ENCODE measurements at regions of chr17 and their contacts with region 1.

Region 1: DNA sequence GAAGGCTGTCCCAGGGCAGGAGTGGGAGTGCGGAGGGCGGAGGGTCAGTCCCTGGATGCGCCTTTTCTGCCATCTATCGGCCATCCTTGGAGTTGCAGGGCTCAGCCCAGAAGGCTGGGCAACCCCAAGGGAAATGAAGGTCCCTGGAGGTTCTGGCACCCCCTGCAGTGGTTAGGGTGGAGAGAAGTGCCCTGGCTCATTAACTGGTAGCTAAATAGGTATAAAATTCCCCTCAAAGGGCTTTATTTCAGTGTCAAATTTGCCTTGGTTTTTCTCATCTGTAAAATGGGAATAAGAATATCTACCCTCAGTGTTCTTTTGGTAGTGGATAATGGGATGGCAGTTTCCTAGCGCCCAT is 22.4 kb downstream of the C17orf75 start:
- DNase-seq: peak; percentile 67 to 85 (median 76)
- H3K4me3 ChIP-seq: peak overlapping the region in 9 of 59 donors; percentile 0 to 37 (median 21)
- H3K27ac ChIP-seq: no peak overlapping the region
- H3K27me3 ChIP-seq: no peaks in the 10 kb centered on the region
- CTCF ChIP-seq: peak; percentile 58 to 97 (median 93)

Region 2: GRCh38 chr17:32206861-32207260 is 112.7 kb before region 1 on chr17:
- intact Hi-C with region 1: loop called in 1 of 2 experiments (anchors 5 kb)
- DNase-seq: no peak
- H3K4me3 ChIP-seq: no peak overlapping the region
- H3K27ac ChIP-seq: no peak overlapping the region
- H3K27me3 ChIP-seq: no peaks in the 10 kb centered on the region
- CTCF ChIP-seq: no peak

Region 3: DNA sequence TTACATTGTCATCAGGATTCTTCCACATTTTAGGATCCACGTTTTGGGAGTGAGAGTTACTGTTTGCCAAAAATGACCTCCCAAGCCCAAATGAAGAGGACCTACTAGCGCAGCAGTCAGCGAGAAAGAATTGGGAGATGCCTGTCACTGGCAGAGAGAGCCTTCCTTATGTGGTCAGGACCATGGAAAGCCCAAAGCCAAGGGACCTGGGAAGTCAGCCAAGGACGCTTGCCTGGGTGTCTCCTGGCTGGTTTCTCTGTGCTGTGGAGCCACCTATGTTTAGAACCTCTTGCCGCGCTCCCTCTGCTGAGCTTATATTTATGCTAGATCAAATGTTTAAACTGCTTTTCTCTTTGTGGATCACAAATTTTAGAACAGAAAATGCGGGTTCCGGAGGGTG is 78.8 kb before region 1 on chr17:
- intact Hi-C with region 1: no loop called
- DNase-seq: peak in 1 of 10 donors; percentile 82
- H3K4me3 ChIP-seq: no peak overlapping the region
- H3K27ac ChIP-seq: no peak overlapping the region
- H3K27me3 ChIP-seq: no peaks in the 10 kb centered on the region
- CTCF ChIP-seq: no peak

Region 4: DNA sequence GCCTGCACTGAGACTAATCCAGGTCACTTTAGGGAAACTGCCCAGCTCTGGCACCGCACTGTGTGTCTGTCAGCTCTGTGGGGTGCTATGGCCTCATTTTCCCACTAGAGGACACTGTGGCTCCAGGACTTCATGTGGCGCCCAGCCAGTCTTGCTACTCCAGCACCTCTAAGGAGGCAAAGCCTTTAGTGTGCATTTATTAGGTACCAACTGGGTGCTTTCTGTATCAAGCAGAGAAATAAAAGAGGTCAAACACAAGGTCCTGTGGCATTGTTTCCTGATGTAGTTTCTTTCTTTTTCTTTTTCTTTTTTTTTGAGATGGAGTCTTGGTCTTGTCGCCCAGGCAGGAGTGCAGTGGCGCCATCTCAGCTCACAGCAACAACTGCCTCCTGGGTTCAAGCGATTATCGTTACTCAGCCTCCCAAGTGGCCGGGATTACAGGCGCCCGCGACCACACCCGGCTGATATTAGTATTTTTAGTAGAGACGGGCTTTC is 66.4 kb before region 1 on chr17:
- intact Hi-C with region 1: loop called (anchors 1 to 2 kb)
- DNase-seq: peak; percentile 77 to 92 (median 86)
- H3K4me3 ChIP-seq: no peak overlapping the region
- H3K27ac ChIP-seq: no peak overlapping the region
- H3K27me3 ChIP-seq: no peaks in the 10 kb centered on the region
- CTCF ChIP-seq: peak; percentile 61 to 99 (median 95)

Region 5: GRCh38 chr17:32283745-32284201 is 35.8 kb before region 1 on chr17:
- intact Hi-C with region 1: no loop called
- DNase-seq: peak in 3 of 10 donors; percentile 17 to 38 (median 32)
- H3K4me3 ChIP-seq: peak overlapping the region in 12 of 59 donors; percentile 3 to 40 (median 10)
- H3K27ac ChIP-seq: peak overlapping the region in 14 of 59 donors; percentile 13 to 67 (median 40)
- H3K27me3 ChIP-seq: no peaks in the 10 kb centered on the region
- CTCF ChIP-seq: no peak

Region 6: DNA sequence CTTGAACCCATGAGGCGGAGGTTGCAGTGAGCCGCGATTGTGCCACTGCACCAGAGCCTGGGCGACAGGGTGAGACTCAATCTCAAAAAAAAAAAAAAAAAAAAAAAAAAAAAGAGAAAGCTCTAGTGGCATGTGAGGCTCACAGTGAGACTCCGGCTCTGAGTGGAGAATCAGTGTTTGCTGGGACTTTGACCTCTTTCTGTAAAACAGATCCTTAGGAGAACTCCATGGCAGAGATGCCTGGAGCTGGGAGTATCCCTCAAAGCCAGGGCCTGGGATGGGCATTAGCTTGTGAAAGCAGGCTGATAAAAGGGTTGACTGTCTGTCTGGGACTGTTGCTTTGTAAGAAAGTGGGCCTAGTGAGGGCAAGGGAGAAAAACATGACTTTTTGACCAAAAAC is 76.8 kb after region 1 on chr17:
- intact Hi-C with region 1: no loop called
- DNase-seq: no peak
- H3K4me3 ChIP-seq: no peak overlapping the region
- H3K27ac ChIP-seq: no peak overlapping the region
- H3K27me3 ChIP-seq: no peaks in the 10 kb centered on the region
- CTCF ChIP-seq: no peak